PC-9 (cell line): ENCODE measurements at regions of chr6 and their contacts with region 1.

Region 1: GRCh38 chr6:112409311-112409710 is 62.2 kb downstream of the RFPL4B start:
- DNase-seq: peak in 1 of 2 experiments; percentile 33
- H3K4me3 ChIP-seq: no peak overlapping the region
- H3K27ac ChIP-seq: no peak overlapping the region
- H3K4me1 ChIP-seq: peaks cover 8% of the 10 kb centered on the region; the same call in 1 of the 2 replicates
- H3K27me3 ChIP-seq: no peaks in the 10 kb centered on the region
- CTCF ChIP-seq: no peak

Region 2: GRCh38 chr6:112592159-112592558 is 182.8 kb after region 1 on chr6:
- CTCF ChIA-PET with region 1: no interaction called
- POLR2A ChIA-PET with region 1: interaction called, 12 read pairs
- intact Hi-C with region 1: no loop called
- DNase-seq: no peak
- H3K4me3 ChIP-seq: no peak overlapping the region
- H3K27ac ChIP-seq: no peak overlapping the region
- H3K4me1 ChIP-seq: no peaks in the 10 kb centered on the region
- H3K27me3 ChIP-seq: no peaks in the 10 kb centered on the region
- CTCF ChIP-seq: no peak